AG04450 (cell line): ENCODE measurements at regions of chr1 and their contacts with region 1.

Region 1: GRCh38 chr1:86704458-86704971 is at the start of gene SH3GLB1:
- DNase-seq: peak; percentile 61
- H3K4me3 ChIP-seq: peak within 1 kb of the TSS; percentile 83
- H3K27ac ChIP-seq: peak within 1 kb of the TSS; percentile 91
- H3K27me3 ChIP-seq: no peaks in the 10 kb centered on the region
- CTCF ChIP-seq: peak; percentile 84
- polyA plus RNA-seq, gene SH3GLB1: 61.3 and 75.9 TPM in 2 replicates

Region 2: DNA sequence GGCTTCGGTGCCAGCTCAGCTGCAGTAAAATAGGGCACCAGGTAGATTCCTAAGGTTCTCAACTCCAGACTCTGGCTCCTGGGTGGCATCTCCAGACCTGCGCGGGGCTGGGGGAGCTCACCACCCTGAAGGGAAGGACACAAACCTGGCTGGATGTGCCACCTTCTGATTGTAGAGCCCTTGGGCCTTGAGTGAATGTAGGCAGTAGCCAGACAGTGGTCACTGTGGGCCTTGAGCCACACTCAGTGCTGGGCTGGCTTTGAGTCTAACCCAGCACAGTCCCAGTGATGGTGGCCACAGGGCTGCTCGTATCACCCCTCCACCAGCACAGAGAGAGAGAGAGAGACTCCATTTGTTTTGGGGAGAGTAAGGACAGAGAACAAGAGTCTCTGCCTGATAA is 38.1 kb before region 1 on chr1:
- CTCF ChIA-PET with region 1: interaction called, 10 read pairs
- POLR2A ChIA-PET with region 1: no interaction called
- DNase-seq: no peak
- H3K4me3 ChIP-seq: no peak overlapping the region
- H3K27ac ChIP-seq: no peak overlapping the region
- H3K27me3 ChIP-seq: no peaks in the 10 kb centered on the region
- CTCF ChIP-seq: no peak

Region 3: DNA sequence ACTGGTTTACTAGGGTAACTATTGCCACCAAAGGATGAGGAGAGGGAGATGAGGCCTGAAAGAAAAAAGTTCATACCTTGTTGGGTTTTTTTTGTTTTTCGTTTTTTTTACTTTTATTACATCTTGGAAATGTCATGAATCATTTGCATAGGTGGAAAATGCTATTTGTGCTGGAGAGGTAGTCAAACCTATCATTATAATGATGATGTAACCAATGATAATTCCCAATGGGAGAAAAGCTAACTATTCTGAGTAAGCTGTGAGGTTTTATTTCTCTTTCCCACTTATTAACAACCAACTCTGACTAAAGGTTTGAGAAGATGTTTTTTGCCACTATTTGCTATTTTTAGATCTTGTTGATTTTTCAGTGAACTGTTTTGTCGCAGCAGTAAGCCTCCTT is 28.8 kb after region 1 on chr1:
- CTCF ChIA-PET with region 1: interaction called, 13 read pairs
- POLR2A ChIA-PET with region 1: interaction called, 6 read pairs
- DNase-seq: no peak
- H3K4me3 ChIP-seq: no peak overlapping the region
- H3K27ac ChIP-seq: no peak overlapping the region
- H3K27me3 ChIP-seq: no peaks in the 10 kb centered on the region
- CTCF ChIP-seq: no peak

Region 4: GRCh38 chr1:86953167-86953566 is 248.7 kb after region 1 on chr1:
- CTCF ChIA-PET with region 1: interaction called, 10 read pairs
- POLR2A ChIA-PET with region 1: no interaction called
- DNase-seq: no peak
- H3K4me3 ChIP-seq: peak overlapping the region; percentile 14; the same call in 1 of the 2 replicates
- H3K27ac ChIP-seq: no peak overlapping the region
- H3K27me3 ChIP-seq: no peaks in the 10 kb centered on the region
- CTCF ChIP-seq: no peak